Dorsolateral prefrontal cortex (tissue), 120 donors: ENCODE measurements at regions of chr17 and their contacts with region 1.

Region 1: GRCh38 chr17:48016112-48016511 is 21.5 kb downstream of the COPZ2 start:
- DNase-seq: no peak
- H3K4me3 ChIP-seq: no peak overlapping the region
- H3K27ac ChIP-seq: no peak overlapping the region
- H3K27me3 ChIP-seq: no peaks in the 10 kb centered on the region
- CTCF ChIP-seq: no peak

Region 2: GRCh38 chr17:47978324-47978723 is 37.8 kb before region 1 on chr17:
- intact Hi-C with region 1: loop called (anchors 2 kb)
- DNase-seq: peak in 9 of 10 donors; percentile 24 to 69 (median 50)
- H3K4me3 ChIP-seq: no peak overlapping the region
- H3K27ac ChIP-seq: no peak overlapping the region
- H3K27me3 ChIP-seq: no peaks in the 10 kb centered on the region
- CTCF ChIP-seq: peak; percentile 46 to 85 (median 76)